ENCODE measurements at regions of chr4 and their contacts with region 1.

Region 1: GRCh38 chr4:67751260-67751659 is 2.9 kb downstream of the GNRHR start:
- DNase-seq: no peak
- ATAC-seq: no peak

Region 2: DNA sequence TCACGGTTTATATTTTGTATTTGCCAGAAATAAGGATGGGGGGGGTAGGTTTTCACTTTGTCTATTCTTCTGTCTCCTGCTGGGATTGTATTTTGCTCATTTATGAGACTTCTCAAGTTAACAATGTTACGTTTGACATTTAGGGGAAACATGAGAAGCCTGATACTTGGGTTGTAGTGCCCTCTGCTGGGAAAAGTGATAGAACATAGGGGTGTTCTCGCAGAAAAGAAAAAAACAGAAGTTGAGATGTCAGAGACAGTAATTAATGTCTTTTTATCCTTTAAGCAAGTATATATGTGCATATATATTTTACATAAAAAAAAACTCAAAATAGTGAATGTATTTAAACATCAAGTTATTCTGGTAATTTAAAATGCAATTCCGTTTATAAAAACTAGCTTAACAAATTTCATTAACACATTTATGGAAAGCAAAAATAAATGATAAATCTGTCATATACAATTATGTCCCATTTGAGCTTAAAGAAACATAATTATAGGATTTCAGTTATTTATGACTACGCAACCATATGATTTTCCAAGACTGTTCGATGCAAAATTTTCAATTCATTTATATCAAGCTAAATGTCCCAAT is 424.4 kb after region 1 on chr4:
- intact Hi-C with region 1: loop called (anchors 10 kb)
- DNase-seq: no peak
- ATAC-seq: no peak